ENCODE measurements at regions of chr5 and their contacts with region 1.

Region 1: DNA sequence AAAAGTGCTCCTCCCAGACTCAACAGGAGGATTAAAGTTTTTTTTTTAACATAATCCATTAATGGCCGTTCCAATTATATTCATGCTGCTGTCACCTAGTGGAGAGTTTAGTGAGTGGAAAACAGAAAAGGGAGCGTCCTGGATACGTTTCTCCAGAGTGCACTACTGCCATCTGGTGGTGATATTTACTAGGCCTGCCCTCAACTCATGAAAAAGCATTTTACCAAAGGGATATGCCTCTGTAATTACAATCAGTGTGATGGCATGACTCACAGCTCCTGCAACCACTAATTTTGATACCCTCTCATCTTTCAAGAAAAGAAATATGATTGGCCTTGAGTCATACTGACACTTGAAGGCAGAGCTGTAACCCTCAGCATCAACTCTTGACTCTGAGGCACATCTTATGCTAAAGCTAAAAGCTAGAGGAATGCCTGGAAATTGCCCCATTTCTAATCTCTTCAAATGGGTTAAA is 20.0 kb downstream of the MINAR2 start:
- DNase-seq: no peak
- ATAC-seq: peak; percentile 91

Region 2: GRCh38 chr5:128667152-128667551 is 1100.8 kb before region 1 on chr5:
- intact Hi-C with region 1: loop called (anchors 10 kb)
- DNase-seq: no peak
- ATAC-seq: no peak

Region 3: DNA sequence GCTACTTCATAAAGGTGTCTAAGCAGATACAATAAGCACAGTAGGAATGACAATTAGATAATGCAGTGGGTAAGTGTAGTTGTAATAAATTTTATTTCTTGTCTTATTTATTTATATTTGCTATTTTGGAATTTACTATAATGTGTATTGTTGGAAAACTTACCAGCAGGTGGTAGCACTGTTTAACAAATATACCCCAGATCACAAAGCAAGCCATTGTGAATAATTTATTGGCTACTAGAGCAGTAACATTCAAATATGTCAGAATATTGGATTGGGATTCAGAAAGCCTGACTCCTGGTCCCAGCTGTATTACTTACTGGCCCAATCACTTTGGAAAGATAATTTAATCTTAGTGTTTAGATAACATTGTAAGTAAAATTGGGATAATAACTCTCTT is 595.4 kb before region 1 on chr5:
- intact Hi-C with region 1: loop called (anchors 2 kb)
- DNase-seq: no peak
- ATAC-seq: peak; percentile 74

Region 4: GRCh38 chr5:129716235-129716634 is 51.7 kb before region 1 on chr5:
- intact Hi-C with region 1: no loop called
- DNase-seq: no peak
- ATAC-seq: no peak

Region 5: GRCh38 chr5:129852747-129853352 is 84.9 kb after region 1 on chr5:
- intact Hi-C with region 1: loop called (anchors 2 kb)
- DNase-seq: peak; percentile 83
- ATAC-seq: no peak

Region 6: DNA sequence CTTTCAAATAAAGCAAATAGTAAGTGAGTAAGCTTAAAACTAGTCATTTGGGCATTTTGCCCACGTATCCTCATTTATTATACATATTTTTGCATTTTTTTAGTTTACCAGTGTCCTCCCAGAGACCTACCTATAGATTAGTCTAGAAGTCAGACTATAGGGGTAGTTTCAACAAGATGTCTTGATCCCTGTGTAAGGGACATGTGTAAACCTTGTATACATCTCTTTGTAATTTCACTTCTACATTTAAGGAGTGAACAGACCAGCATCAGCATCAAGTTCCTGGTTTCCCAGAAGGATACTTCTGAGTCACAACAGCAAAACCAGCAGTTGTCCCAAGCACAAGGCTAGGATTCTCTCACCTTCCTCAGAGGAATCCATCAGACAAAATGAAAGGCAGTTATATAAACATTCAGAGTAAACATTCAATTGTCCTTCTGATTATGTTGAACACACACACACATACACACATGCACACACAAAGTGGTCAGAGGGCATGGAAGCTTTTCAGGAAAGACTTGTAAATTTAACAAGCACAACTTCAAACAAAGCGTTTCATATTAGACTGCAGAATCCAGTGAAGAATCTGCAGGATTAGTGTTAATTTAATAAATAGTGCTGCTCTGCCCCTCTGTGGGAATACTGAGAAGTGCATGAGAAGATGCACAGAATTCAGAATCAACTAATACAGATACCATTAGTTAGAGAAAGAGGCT is 1341.8 kb after region 1 on chr5:
- intact Hi-C with region 1: loop called (anchors 5 kb)
- DNase-seq: no peak
- ATAC-seq: no peak

Measured in Right ventricle myocardium inferior (tissue), 1 donor.